AG04450 (cell line): ENCODE measurements at regions of chr3 and their contacts with region 1.

Region 1: GRCh38 chr3:15576475-15576874 is 24.9 kb downstream of the HACL1 start:
- DNase-seq: no peak
- H3K4me3 ChIP-seq: no peak overlapping the region
- H3K27ac ChIP-seq: no peak overlapping the region
- H3K27me3 ChIP-seq: no peaks in the 10 kb centered on the region
- CTCF ChIP-seq: no peak

Region 2: DNA sequence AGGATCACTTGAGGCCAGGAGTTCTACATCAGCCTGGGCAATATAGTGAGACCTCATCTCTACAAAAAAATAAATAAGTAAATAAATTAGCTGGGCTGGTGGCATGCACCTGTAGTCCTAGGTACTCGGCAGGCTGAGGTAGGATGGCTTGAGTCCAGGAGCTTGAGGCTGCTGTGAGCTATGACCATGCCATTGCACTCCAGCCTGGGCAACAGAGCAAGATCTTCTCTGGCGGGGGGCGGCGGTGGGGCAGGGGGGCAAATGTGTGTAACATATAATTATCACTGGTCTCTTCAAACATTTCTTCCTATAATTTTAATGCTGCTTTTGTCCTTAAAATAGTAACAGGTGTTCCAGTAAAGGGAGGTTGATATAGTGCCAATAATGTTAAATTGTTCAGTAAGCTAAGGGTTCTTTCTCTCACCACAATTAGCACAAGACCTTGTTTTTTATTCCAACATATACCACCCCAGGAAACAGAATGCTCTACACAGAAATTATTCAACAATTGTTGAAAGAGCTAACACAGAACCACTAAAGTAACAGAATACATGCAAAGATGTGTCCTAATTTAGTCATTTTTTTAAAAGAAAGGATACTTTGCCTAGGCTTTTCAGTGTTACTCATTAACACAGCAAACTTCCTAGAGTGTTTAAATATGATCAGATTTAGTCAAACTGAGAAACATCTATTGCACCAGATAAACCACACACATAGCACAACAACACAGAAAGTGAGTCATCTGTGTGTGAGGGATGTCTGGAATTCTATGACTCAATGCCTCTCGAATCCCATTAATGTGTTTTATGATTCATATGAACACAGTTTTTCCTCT is 192.2 kb after region 1 on chr3:
- CTCF ChIA-PET with region 1: no interaction called
- POLR2A ChIA-PET with region 1: no interaction called
- DNase-seq: peak; percentile 82
- H3K4me3 ChIP-seq: no peak overlapping the region
- H3K27ac ChIP-seq: peak overlapping the region; percentile 21
- H3K27me3 ChIP-seq: no peaks in the 10 kb centered on the region
- CTCF ChIP-seq: no peak

Region 3: GRCh38 chr3:16214366-16214765 is 637.9 kb after region 1 on chr3:
- CTCF ChIA-PET with region 1: no interaction called
- POLR2A ChIA-PET with region 1: no interaction called
- DNase-seq: no peak
- H3K4me3 ChIP-seq: no peak overlapping the region
- H3K27ac ChIP-seq: no peak overlapping the region
- H3K27me3 ChIP-seq: no peaks in the 10 kb centered on the region
- CTCF ChIP-seq: no peak

Region 4: GRCh38 chr3:17110660-17111396 is 1534.4 kb after region 1 on chr3:
- CTCF ChIA-PET with region 1: interaction called, 12 read pairs
- POLR2A ChIA-PET with region 1: no interaction called
- DNase-seq: no peak
- H3K4me3 ChIP-seq: no peak overlapping the region
- H3K27ac ChIP-seq: no peak overlapping the region
- H3K27me3 ChIP-seq: no peaks in the 10 kb centered on the region
- CTCF ChIP-seq: no peak